ENCODE measurements at regions of chr5 and their contacts with region 1.

Region 1: GRCh38 chr5:150511578-150512367 is 3.8 kb downstream of the NDST1 start:
- DNase-seq: no peak
- H3K4me3 ChIP-seq: no peak overlapping the region
- CTCF ChIP-seq: no peak

Region 2: GRCh38 chr5:150317048-150318003 is 194.4 kb before region 1 on chr5:
- CTCF ChIA-PET with region 1: no interaction called
- POLR2A ChIA-PET with region 1: no interaction called
- DNase-seq: no peak
- H3K4me3 ChIP-seq: no peak overlapping the region
- CTCF ChIP-seq: no peak

Region 3: DNA sequence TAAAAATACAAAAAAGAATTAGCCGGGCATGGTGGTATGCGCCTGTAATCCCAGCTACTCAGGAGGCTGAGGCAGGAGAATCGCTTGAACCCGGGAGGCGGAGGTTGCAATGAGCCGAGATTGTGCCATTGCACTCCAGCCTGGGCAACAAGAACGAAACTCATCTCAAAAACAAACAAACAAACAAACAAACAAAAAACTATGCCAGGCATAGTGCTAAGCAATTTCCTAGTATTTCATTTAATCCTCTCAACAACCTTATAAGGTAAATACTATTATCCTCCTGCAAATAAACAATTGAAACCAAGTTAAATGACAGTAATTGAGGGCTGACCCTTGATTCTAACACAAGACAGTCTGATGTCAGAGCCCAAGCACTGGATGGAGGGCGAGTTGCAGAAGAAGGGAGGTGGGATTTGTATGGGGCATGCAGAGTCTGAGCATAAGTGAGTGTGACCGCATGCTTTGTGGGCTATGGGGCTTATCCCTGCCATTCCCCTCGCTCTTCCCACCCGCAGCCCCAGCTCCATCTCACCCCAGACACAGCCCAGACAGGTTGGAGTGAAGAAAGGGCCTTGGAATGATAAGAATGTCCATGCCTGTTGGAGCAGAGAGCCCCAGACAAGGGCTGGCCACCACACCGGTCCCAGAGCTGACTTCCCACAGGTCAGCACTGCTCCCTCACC is 38.0 kb before region 1 on chr5:
- CTCF ChIA-PET with region 1: interaction called, 3 read pairs
- POLR2A ChIA-PET with region 1: interaction called, 12 read pairs
- DNase-seq: no peak
- H3K4me3 ChIP-seq: no peak overlapping the region
- CTCF ChIP-seq: no peak

Region 4: DNA sequence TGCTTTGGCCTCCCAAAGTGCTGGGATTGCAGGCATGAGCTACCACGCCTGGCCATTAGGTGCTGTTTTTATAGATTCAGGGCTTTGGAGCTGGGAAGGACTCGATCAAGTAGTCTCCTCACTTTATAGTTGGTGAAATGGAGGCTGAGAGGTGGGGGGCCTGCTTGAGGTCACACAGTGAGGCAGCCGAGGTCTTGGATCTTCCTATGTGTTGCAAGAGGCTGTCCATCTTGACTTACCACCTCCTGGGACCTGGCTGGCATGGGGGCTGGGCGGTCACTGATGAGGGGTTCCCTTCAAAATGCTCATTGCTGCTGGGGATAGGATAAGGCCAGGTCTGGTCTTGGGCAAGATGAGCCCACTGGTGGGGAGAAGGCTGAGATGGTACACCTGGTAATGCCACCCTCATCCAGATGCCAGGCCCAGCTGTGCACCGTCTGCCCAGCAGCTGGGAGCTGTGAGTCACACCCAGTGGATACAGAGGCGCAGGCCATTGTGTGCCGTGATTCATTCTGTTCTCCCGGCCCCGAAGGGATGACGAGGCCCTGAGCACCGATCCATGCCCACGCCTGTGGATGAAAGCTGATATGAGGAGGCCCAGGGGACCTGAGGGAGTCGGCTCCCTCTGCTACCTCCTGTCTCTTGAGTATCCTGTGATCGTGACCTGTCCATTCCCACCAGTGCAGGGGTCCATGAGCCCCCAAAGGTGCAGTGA is 14.3 kb before region 1 on chr5:
- CTCF ChIA-PET with region 1: interaction called, 17 read pairs
- POLR2A ChIA-PET with region 1: interaction called, 25 read pairs
- DNase-seq: no peak
- H3K4me3 ChIP-seq: peak overlapping the region; percentile 35
- CTCF ChIP-seq: no peak

Region 5: GRCh38 chr5:150523472-150524350 is 11.9 kb after region 1 on chr5:
- CTCF ChIA-PET with region 1: interaction called, 30 read pairs
- POLR2A ChIA-PET with region 1: no interaction called
- DNase-seq: no peak
- H3K4me3 ChIP-seq: no peak overlapping the region
- CTCF ChIP-seq: peak; percentile 69